ENCODE measurements at regions of chr1 and their contacts with region 1.

Region 1: GRCh38 chr1:162670928-162671663 is 38.8 kb downstream of the DDR2 start:
- DNase-seq: no peak

Region 2: GRCh38 chr1:162633081-162633762 is 37.9 kb before region 1 on chr1:
- intact Hi-C with region 1: loop called in 1 of 2 experiments (anchors 5 kb)
- DNase-seq: no peak